ENCODE measurements at regions of chr11 and their contacts with region 1.

Region 1: GRCh38 chr11:75280227-75280701 is 39.7 kb downstream of the TPBGL start:
- DNase-seq: peak; percentile 89
- H3K4me3 ChIP-seq: no peak overlapping the region
- H3K27ac ChIP-seq: peak overlapping the region; percentile 38 to 65 (median 54)
- H3K4me1 ChIP-seq: peaks cover 0 to 12% (median 7%) of the 10 kb centered on the region in 4 donors
- H3K27me3 ChIP-seq: no peaks in the 10 kb centered on the region
- CTCF ChIP-seq: peak; percentile 95 to 98 (median 96)
- EP300 ChIP-seq: no peak
- POLR2A ChIP-seq: no peak

Region 2: DNA sequence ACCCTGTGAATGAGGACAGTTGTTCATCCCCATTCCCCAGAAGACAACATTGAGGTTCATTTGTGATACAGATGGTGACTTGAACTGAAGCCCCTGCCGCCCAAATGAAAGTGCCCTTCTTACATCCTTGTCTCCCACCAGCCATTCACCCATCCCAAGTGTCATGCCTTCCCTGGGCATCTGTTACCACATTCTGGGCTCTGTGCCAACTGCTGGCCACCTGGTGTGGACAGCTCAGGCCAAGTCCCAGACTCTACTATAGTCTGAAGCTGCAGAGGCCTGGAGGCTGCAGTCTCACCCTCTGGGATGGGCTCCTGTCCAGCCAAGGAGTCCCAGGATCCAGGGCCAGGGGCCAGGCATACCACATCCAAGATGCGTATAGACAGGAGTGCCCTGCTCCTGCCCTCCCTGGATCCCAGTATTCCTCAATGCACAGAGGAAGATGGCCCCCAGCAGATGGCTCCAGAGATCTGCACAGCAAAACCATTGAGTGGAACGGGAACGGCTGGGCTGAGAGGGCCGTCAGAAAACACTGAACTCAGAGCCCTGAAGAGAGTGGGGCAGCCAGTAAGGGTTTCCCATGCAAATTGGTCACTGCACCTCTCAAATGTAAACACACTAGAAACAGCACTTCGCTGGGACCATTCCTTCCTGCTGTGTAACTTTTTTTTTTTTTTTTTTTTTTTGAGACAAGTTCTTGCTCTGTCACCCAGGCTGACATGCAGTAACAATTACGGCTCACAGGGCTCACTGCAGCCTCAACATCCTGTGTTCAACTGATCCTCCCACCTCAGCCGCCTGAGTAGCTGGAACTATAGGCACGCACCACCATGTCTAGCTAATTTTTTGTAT is 48.4 kb after region 1 on chr11:
- intact Hi-C with region 1: loop called (anchors 2 kb)
- DNase-seq: peak; percentile 88
- H3K4me3 ChIP-seq: no peak overlapping the region
- H3K27ac ChIP-seq: peak overlapping the region; percentile 73 to 98 (median 86)
- H3K4me1 ChIP-seq: peaks cover 0 to 78% (median 70%) of the 10 kb centered on the region in 4 donors
- H3K27me3 ChIP-seq: no peaks in the 10 kb centered on the region
- CTCF ChIP-seq: peak; percentile 63 to 82 (median 74)
- EP300 ChIP-seq: no peak
- POLR2A ChIP-seq: no peak

Region 3: DNA sequence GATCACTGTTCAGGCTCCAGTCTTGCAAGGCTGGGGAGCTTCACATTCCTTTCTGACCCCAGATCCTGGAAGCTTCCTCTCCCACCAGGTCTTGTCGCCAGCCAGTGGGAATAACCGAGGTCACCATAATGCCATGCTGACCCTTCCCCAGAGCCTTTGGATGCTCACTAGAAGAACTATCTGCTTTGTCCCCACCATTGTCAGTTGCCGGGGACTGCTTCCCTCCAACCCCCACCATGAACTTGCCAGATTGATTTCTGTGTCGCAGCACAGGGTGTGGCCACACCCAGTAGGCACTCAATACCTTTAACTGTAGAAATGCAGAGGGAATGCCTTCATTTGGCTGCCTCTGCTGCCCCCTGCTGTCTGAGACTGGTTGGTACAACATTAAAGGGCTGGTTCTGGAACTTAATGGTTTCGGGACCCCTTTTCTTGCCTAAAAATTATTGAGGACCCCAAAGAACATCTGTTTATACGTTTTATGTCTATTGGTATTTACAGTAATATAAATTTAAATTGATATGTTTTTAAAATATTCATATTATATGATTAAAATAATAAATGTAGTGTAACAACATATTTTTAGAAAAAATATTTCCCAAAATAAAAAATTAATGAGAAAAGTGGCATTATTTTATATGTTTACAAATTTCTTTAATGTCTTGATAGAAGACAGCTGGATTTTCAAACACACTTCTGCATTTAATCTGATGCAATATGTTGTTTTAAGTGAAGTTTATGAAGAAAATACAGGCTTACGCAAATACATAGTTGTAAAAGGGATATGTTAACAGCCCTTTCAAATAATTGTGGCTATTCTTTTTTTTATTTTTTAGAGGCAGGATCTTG is 252.2 kb after region 1 on chr11:
- intact Hi-C with region 1: loop called (anchors 10 kb)
- DNase-seq: peak; percentile 80
- H3K4me3 ChIP-seq: no peak overlapping the region
- H3K27ac ChIP-seq: no peak overlapping the region
- H3K4me1 ChIP-seq: no peaks in the 10 kb centered on the region
- H3K27me3 ChIP-seq: no peaks in the 10 kb centered on the region
- CTCF ChIP-seq: peak; percentile 67 to 95 (median 93)
- EP300 ChIP-seq: no peak
- POLR2A ChIP-seq: no peak